Tibial artery (tissue), 4 donors: ENCODE measurements at regions of chr11 and their contacts with region 1.

Region 1: DNA sequence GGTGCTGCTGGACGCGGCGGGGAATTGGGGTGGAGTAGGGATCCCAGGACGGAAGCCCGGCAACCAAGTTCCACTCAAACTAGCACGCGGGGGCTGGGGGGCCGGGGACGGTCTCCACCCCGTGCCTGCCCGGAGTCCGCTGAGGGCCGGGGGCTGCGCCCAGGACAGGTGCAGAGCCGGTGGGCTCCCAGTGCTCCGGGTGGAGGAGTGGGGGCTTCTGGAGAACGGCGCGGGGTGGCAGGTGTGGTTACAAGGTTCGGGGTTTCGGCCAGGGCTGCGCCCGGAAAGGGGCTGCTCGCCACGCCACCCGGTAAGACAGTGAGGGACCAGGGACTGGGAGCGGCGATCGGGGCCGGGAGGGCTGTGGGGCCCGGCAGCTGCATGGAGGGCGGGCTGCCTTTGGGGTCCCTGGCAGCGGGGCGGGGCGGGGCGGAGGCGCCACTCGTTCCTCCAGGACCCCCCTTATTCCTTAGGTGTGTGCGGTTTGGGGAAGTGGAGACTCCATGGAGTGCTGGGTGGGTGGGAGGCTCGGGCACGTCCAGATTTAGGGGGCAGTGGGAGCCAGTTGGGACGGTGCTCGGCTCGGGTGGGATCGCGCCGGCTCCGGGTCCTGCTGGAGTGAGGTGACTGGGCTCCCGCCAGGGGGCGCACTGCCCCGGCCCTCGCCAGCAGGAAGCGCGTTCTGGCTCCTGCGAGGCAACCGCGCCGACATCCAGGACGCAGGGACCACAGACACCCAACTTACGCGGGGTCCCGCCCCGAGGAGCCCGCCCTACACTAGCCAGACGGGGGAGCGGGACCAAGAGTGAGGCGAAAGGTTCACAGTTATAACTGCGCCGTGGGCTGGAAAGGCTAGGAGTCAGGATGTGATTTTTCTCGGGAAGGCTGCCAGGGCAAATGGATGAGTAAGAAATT is 868 bp downstream of the TSPAN18 start:
- DNase-seq: peak; percentile 72 to 89
- H3K4me3 ChIP-seq: peak overlapping the region; percentile 61 to 73
- H3K27ac ChIP-seq: peak overlapping the region; percentile 59 to 60
- H3K4me1 ChIP-seq: peaks cover 0 to 33% (median 23%) of the 10 kb centered on the region in 4 donors
- H3K27me3 ChIP-seq: peaks cover 0 to 2% of the 10 kb centered on the region in 2 donors
- CTCF ChIP-seq: peak; percentile 94 to 96

Region 2: DNA sequence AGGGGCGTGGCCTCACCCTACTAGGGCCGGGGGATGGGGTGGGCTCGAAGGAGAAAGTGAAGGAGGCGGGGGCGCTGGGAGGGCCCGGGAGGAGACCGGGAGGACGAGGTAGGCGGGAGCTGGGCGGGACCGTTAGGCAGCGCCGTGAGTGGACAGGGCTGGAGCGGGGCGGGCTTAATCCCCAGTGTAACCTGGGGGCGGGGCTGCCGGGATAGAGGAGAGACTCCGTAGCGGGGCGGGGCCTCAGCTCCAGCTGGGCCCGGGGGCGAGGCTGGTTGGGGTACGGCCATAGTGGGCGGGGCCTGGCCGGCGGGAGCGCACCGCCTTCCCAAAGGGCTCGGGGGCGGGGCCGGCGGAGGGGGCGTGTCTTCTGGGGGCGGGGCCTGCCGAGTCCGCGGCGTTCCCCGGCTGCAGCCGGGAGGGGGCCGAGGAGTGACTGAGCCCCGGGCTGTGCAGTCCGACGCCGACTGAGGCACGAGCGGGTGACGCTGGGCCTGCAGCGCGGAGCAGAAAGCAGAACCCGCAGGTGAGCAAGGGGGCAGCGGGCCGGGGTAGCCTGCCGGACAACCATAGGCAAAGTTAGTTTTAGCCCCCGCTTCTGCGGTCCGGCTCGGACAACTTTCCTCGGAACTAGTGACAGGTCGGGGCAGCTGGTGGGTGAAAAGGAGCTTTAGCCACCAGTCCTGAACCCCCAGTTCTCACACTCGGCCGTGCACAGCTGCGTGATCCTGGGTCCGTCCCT is 162.2 kb before region 1 on chr11 and contains the start of gene CD82:
- intact Hi-C with region 1: loop called (anchors 10 kb)
- DNase-seq: peak; percentile 100
- H3K4me3 ChIP-seq: peak within 1 kb of the TSS; percentile 59 to 70
- H3K27ac ChIP-seq: peak within 1 kb of the TSS; percentile 98 to 99
- H3K4me1 ChIP-seq: peaks cover 6 to 76% (median 61%) of the 10 kb centered on the region in 4 donors
- H3K27me3 ChIP-seq: no peaks in the 10 kb centered on the region
- CTCF ChIP-seq: peak; percentile 43

Region 3: GRCh38 chr11:44621140-44621681 is 106.4 kb before region 1 on chr11:
- intact Hi-C with region 1: loop called (anchors 5 kb)
- DNase-seq: peak; percentile 53 to 82
- H3K4me3 ChIP-seq: no peak overlapping the region
- H3K27ac ChIP-seq: no peak overlapping the region
- H3K4me1 ChIP-seq: peaks cover 0 to 20% (median 11%) of the 10 kb centered on the region in 4 donors
- H3K27me3 ChIP-seq: no peaks in the 10 kb centered on the region
- CTCF ChIP-seq: peak; percentile 97 to 99

Region 4: DNA sequence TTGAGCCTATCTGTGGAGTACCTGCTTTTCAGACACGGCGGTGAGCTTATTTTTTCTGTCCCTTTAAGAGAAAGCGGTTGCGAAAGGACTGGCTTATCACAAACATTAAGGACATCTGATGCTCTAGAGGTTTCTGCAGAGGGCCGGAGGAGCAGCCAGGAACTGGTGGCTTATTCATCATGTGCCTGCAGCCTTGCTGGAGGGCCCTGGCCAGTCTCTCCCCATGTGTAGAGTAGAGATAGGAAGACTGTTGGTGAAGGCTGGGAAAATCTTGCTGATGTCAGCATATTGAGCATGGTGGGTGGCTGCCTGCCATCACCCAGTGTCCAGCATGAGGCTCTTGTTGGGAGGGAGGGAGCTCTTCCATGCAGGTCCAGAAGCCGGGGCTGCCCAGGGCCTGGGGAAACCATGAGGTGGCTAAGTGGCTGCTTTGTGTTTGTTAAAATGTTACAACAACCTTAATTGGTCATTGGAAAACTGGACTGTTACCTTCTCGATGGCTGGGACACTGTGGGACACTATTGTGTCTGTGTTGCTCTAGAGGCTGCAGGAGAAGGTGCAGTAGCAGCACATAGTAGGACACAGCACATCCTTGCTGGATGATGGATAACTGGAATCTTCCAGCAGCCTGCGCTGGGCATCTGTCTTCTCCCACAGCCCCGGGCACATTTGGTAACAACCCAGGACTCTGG is 53.5 kb after region 1 on chr11:
- intact Hi-C with region 1: loop called (anchors 5 kb)
- DNase-seq: peak; percentile 40 to 59
- H3K4me3 ChIP-seq: no peak overlapping the region
- H3K27ac ChIP-seq: no peak overlapping the region
- H3K4me1 ChIP-seq: peaks cover 0 to 19% (median 6%) of the 10 kb centered on the region in 4 donors
- H3K27me3 ChIP-seq: no peaks in the 10 kb centered on the region
- CTCF ChIP-seq: no peak

Region 5: GRCh38 chr11:44893846-44894617 is 166.4 kb after region 1 on chr11:
- intact Hi-C with region 1: loop called (anchors 2 kb)
- DNase-seq: peak; percentile 51 to 85
- H3K4me3 ChIP-seq: peak overlapping the region; percentile 4 to 23
- H3K27ac ChIP-seq: peak overlapping the region; percentile 61 to 68
- H3K4me1 ChIP-seq: peaks cover 0 to 27% (median 9%) of the 10 kb centered on the region in 4 donors
- H3K27me3 ChIP-seq: no peaks in the 10 kb centered on the region
- CTCF ChIP-seq: peak; percentile 92 to 94

Region 6: DNA sequence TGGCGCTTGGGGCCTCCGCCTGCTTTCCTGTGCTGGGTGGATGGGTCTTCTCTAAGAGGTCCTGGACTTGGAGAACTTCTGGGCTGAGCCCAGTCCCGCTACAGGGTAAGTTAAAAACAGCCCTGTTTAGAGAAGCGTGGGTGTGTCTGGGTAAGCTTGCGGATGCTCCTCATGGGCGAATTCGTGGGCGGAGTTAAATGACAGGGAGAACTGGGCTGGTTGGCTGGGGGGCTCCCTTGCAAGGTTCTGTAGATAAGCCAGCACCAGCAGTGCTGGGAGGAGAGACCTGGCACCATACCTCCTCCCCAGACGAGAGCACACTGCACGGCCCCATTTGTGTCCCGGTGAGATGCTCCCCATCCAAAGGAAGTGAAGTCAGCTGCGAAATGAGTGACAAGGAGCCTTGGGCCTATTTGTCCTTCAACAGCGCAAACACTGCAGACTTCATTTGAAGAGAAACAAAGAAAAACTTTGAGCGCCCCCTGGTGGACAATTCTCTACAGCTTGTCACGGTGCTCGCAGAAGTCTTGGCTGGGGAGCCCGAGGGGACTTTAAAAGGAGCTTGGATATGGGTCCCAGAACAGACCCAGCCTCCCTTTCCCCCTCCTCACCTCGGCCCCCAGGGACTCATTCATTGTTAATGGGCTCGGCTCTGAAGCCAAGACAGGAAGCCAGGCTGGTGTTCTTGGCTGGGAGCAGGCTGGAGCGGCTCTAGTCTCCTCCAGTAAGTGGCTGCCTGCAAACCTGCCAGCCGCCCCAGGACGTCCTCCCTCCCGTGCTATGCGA is 183.6 kb after region 1 on chr11:
- intact Hi-C with region 1: loop called (anchors 5 kb)
- DNase-seq: peak; percentile 82 to 90
- H3K4me3 ChIP-seq: no peak overlapping the region
- H3K27ac ChIP-seq: peak overlapping the region in 1 of 2 donors; percentile 36
- H3K4me1 ChIP-seq: peaks cover 0 to 20% (median 13%) of the 10 kb centered on the region in 4 donors
- H3K27me3 ChIP-seq: no peaks in the 10 kb centered on the region
- CTCF ChIP-seq: peak; percentile 81 to 88